ENCODE measurements at regions of chrX and their contacts with region 1.

Region 1: GRCh38 chrX:23907498-23908218 is at the starts of genes APOO and CXorf58:
- DNase-seq: peak; percentile 88
- H3K4me3 Mint-ChIP-seq: peak within 1 kb of the TSS; percentile 85
- H3K27ac Mint-ChIP-seq: peak within 1 kb of the TSS; percentile 89
- H3K4me1 Mint-ChIP-seq: peaks cover 13% of the 10 kb centered on the region
- H3K27me3 Mint-ChIP-seq: no peaks in the 10 kb centered on the region
- total RNA-seq, gene APOO: 29.0 and 30.0 TPM in 2 replicates
- total RNA-seq, gene CXorf58: not detected in 2 replicates

Region 2: GRCh38 chrX:23732704-23733103 is 175.0 kb before region 1 on chrX:
- intact Hi-C with region 1: loop called (anchors 1 kb)
- DNase-seq: no peak
- H3K4me3 Mint-ChIP-seq: peak overlapping the region; percentile 30
- H3K27ac Mint-ChIP-seq: peak overlapping the region; percentile 83
- H3K4me1 Mint-ChIP-seq: peaks cover 29% of the 10 kb centered on the region
- H3K27me3 Mint-ChIP-seq: no peaks in the 10 kb centered on the region

Region 3: GRCh38 chrX:23952984-23953907 is 45.6 kb after region 1 on chrX:
- intact Hi-C with region 1: loop called (anchors 1 kb)
- DNase-seq: peak; percentile 45
- H3K4me3 Mint-ChIP-seq: peak overlapping the region; percentile 82
- H3K27ac Mint-ChIP-seq: peak overlapping the region; percentile 95
- H3K4me1 Mint-ChIP-seq: peaks cover 28% of the 10 kb centered on the region
- H3K27me3 Mint-ChIP-seq: no peaks in the 10 kb centered on the region

Region 4: GRCh38 chrX:24024819-24025740 is 117.4 kb after region 1 on chrX:
- intact Hi-C with region 1: loop called (anchors 1 kb)
- DNase-seq: peak; percentile 72
- H3K4me3 Mint-ChIP-seq: peak overlapping the region; percentile 92
- H3K27ac Mint-ChIP-seq: peak overlapping the region; percentile 88
- H3K4me1 Mint-ChIP-seq: peaks cover 25% of the 10 kb centered on the region
- H3K27me3 Mint-ChIP-seq: no peaks in the 10 kb centered on the region

Region 5: DNA sequence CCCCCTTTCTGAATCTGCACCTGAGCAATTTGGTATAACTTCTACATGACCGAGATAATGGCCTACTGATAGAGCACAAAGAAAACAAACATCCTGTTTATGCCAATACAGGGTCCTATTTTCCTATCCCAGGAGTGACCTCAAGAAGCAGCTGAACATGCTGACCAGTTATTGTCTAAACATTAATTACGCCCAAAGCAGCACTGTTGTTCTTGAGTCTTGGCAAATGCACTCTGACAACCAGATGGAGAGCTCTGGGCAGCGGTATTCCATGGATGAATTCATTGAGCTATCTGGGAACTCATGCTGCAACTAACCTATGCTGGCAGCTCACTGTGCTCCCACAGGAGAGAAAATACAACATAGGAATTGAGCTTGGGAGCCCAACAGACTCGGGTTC is 686.8 kb after region 1 on chrX:
- intact Hi-C with region 1: no loop called
- DNase-seq: no peak
- H3K4me3 Mint-ChIP-seq: no peak overlapping the region
- H3K27ac Mint-ChIP-seq: no peak overlapping the region
- H3K4me1 Mint-ChIP-seq: no peaks in the 10 kb centered on the region
- H3K27me3 Mint-ChIP-seq: peaks cover 8% of the 10 kb centered on the region

Region 6: GRCh38 chrX:25300994-25301393 is 1393.3 kb after region 1 on chrX:
- intact Hi-C with region 1: no loop called
- DNase-seq: no peak
- H3K4me3 Mint-ChIP-seq: no peak overlapping the region
- H3K27ac Mint-ChIP-seq: no peak overlapping the region
- H3K4me1 Mint-ChIP-seq: no peaks in the 10 kb centered on the region
- H3K27me3 Mint-ChIP-seq: no peaks in the 10 kb centered on the region

Measured in activated T-helper 1 cell treated with anti-CD3 and anti-CD28 coated beads, Interleukin-12 subunit alpha, Interleukin-12 subunit beta, Interleukin-2, Interleukin-4 antibody, amounts not matched to agents 30 ng/mL and 10 ng/mL and 1 ng/mL, durations not matched to agents 14 hours and 24 hours and 36 hours (primary cell).